ENCODE measurements at regions of chr22 and their contacts with region 1.

Region 1: DNA sequence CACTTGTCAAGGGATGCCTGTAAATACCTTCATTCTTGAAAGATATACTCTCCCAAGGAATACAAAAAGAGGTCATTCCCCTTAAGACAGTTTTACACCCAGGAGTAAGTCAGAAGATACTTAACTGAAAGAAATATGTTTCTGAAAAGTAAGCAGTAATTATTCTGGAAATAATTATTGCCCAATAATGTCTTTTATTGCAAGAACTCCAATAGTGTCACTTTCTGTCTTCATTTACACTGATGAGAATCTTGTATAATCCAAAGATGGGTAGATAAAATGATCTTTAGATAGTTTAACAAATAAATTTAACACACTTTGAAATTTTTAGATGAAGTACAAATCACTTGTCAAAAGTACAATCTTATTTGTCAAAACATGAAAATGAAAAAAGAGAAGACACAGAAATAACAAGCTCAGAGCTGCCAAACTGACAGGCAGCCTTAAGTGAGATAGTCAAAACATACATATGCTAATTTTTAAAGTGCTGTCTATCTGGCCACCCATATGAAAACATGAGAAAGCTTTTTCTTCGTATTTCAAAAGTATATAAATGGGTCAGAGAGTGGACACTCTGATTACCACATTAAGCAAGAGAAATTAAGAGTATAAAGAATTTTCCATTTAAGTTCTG is 225.1 kb downstream of the TTC28 start:
- DNase-seq: no peak
- ATAC-seq: no peak
- H3K4me3 ChIP-seq: no peak overlapping the region
- H3K27ac ChIP-seq: no peak overlapping the region
- H3K4me1 ChIP-seq: no peaks in the 10 kb centered on the region
- H3K27me3 ChIP-seq: no peaks in the 10 kb centered on the region
- CTCF ChIP-seq: no peak

Region 2: GRCh38 chr22:28435982-28436381 is 18.6 kb before region 1 on chr22:
- intact Hi-C with region 1: loop called in 1 of 2 experiments (anchors 1 kb)
- DNase-seq: no peak
- ATAC-seq: no peak
- H3K4me3 ChIP-seq: no peak overlapping the region
- H3K27ac ChIP-seq: no peak overlapping the region
- H3K4me1 ChIP-seq: peaks cover 55% of the 10 kb centered on the region
- H3K27me3 ChIP-seq: no peaks in the 10 kb centered on the region
- CTCF ChIP-seq: no peak

Measured in psoas muscle (tissue), 8 donors.